Activated T-helper 1 cell treated with anti-CD3 and anti-CD28 coated beads, Interleukin-12 subunit alpha, Interleukin-12 subunit beta, Interleukin-2, Interleukin-4 antibody, amounts not matched to agents 30 ng/mL and 10 ng/mL and 1 ng/mL, durations not matched to agents 14 hours and 24 hours and 36 hours (primary cell): ENCODE measurements at regions of chr9 and their contacts with region 1.

Region 1: DNA sequence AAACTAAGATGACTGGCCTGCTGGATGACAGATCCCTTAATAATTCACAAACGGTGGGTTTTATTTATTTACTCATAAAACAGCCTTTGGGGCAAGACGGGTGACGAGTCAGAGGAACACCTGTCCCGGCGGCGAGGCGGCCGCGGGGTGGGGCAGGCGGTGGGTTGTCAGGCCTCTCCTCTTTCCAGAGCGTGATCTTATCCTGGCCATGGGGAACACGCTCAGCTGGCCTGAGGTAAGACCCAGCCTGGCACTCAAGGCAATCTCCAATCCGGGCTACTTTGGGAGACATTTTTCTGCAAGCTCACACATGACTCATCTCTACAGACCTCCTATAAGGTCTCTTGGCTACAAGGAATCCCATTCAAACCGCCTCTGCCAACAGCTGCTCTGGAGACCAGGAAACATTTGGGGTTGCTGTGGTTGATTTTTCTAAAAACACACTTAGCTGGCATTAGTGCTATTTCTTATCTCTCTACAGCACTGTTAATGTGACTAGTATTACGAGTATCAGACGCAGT is 6.3 kb downstream of the RAPGEF1 start:
- DNase-seq: no peak
- H3K4me3 Mint-ChIP-seq: peak overlapping the region; percentile 73
- H3K27ac Mint-ChIP-seq: peak overlapping the region; percentile 96
- H3K4me1 Mint-ChIP-seq: peaks cover 84% of the 10 kb centered on the region
- H3K27me3 Mint-ChIP-seq: no peaks in the 10 kb centered on the region

Region 2: GRCh38 chr9:131277910-131278701 is 455.5 kb before region 1 on chr9:
- intact Hi-C with region 1: loop called (anchors 5 kb)
- DNase-seq: peak; percentile 63
- H3K4me3 Mint-ChIP-seq: peak overlapping the region; percentile 86
- H3K27ac Mint-ChIP-seq: peak overlapping the region; percentile 93
- H3K4me1 Mint-ChIP-seq: peaks cover 30% of the 10 kb centered on the region
- H3K27me3 Mint-ChIP-seq: peaks cover 16% of the 10 kb centered on the region

Region 3: DNA sequence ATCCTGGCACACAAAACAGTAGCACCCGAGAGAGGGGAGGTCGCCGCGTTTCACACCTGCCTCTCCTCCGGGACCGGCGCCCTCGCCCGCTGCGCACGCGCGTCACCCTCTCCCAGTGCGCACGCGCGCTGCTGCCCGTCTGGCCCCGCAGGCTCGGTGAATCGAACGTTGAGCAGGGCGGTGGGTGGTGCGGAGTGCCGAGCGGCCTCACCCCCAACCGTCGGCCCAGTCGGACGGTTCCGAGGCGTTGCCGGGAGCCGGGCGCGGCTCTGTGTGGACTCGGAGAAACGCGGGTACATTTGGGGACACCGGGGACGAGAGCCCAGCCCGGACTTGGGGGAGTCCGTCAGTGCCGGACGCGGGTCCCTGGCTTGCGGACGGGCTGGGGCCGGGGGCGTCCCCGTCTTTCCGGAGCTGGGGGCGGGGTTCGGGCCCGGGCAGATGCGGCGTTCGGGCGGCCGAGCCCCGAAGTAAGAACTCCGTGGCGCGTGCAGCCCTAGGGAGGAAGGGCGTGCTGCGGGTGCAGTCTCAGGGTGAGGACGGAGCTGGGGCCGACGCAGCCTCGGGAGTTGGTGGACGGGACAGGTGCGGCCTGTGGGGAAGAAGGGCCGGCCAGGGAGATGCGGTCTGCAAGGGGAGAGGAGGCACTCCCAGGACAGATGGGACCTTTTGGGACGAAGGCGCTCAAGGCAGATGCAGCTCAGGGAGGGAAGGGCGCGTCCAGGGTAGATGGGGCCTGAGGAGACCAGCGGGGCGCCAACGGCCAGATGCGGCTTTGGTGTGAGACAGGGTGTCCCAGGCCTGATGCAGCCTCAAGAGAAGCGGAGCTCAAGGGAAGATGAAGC is 230.6 kb before region 1 on chr9 and contains the start of gene POMT1:
- intact Hi-C with region 1: loop called (anchors 5 kb)
- DNase-seq: peak; percentile 90
- H3K4me3 Mint-ChIP-seq: peak within 1 kb of the TSS; percentile 93
- H3K27ac Mint-ChIP-seq: peak within 1 kb of the TSS; percentile 90
- H3K4me1 Mint-ChIP-seq: peaks cover 48% of the 10 kb centered on the region
- H3K27me3 Mint-ChIP-seq: no peaks in the 10 kb centered on the region
- total RNA-seq, gene POMT1: 39.1 and 39.3 TPM in 2 replicates

Region 4: DNA sequence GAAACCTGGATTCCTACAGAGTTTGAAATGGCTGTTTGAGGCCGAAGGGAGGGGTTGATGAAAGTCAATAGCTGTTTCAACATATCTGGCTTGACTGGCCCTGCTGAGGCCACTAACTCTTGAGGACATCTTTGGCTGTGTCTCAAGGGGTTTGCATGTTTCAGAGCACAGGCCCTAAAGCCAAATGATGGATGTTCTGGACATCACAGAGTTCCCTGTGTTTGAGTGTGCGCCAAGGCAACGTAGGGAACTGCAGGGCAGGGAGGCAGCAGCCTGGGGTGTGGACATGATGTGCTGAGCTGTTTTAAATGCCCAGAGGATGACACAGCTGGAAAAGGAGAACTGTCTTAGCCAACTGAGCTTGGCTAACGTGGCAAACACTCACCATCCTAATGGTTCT is 83.3 kb before region 1 on chr9:
- intact Hi-C with region 1: loop called (anchors 1 kb)
- DNase-seq: no peak
- H3K4me3 Mint-ChIP-seq: no peak overlapping the region
- H3K27ac Mint-ChIP-seq: peak overlapping the region; percentile 71
- H3K4me1 Mint-ChIP-seq: peaks cover 73% of the 10 kb centered on the region
- H3K27me3 Mint-ChIP-seq: no peaks in the 10 kb centered on the region

Region 5: GRCh38 chr9:131678499-131679111 is 55.0 kb before region 1 on chr9:
- intact Hi-C with region 1: loop called (anchors 1 kb)
- DNase-seq: peak; percentile 76
- H3K4me3 Mint-ChIP-seq: peak overlapping the region; percentile 84
- H3K27ac Mint-ChIP-seq: peak overlapping the region; percentile 99
- H3K4me1 Mint-ChIP-seq: peaks cover 92% of the 10 kb centered on the region
- H3K27me3 Mint-ChIP-seq: no peaks in the 10 kb centered on the region

Region 6: GRCh38 chr9:131720330-131720729 is 13.3 kb before region 1 on chr9:
- intact Hi-C with region 1: loop called (anchors 1 kb)
- DNase-seq: no peak
- H3K4me3 Mint-ChIP-seq: peak overlapping the region; percentile 47
- H3K27ac Mint-ChIP-seq: peak overlapping the region; percentile 84
- H3K4me1 Mint-ChIP-seq: peaks cover 88% of the 10 kb centered on the region
- H3K27me3 Mint-ChIP-seq: no peaks in the 10 kb centered on the region